ENCODE measurements at regions of chr22 and their contacts with region 1.

Region 1: DNA sequence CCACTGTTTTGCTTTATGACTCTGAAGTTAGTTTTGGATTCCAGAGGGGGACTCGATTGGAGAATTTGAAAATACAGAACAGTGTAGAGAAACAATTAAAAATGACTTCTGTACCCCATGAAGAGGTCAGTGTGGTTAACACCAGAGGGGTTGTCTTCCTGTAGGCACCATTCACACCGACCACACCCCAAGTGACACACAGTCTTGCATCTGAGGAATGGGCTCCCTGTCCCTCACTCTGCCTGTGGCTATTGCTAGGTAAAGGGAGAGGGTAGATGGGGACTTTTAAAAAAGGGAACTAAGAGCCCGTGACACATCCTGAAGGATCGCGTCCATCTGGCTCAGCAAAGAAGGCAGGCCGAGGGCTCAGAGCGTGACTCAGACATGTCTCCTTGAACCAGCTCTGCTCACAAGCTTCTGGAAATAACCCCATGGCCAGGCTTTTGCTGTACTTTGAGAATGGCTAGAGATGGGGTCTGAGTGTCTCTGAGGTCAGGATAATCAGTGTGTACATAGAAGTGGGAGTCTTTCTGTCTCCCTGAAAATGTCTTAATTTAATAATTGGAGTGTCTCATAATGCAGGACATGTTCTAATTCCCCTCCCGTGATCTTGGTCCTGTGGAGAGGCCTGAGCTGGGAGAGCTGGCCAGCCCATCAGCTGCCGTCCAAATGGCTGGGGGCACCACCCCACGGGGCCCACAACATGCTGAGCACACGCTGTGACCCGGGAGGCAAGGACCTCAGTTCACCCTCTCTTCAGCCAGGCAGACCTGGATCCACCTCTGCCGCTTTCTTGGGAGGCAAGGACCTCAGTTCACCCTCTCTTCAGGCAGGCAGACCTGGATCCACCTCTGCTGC is 39.3 kb downstream of the SGSM1 start:
- H3K4me3 ChIP-seq: no peak overlapping the region
- H3K27ac ChIP-seq: no peak overlapping the region
- H3K4me1 ChIP-seq: no peaks in the 10 kb centered on the region
- CTCF ChIP-seq: no peak

Region 2: DNA sequence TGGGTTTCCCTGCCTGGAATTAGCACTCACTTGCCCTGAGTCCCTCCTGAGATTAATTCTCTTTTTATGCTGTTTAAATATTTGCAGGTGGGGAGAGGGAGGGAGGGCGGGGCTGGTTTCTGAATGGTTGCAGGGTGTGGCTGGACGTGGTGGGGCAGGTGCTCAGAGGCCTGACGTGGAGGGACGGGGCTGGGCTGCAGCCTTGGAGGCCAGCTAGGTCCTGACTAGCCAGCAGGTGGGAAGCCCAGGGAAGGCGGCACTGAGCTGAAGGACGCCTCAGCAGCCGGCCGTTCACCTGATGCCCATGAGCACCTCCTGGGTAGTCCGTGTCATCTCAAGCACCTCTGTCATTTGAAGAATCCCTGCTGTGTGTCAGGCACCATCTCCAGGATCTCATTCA is 18.0 kb before region 1 on chr22:
- CTCF ChIA-PET with region 1: interaction called, 10 read pairs
- POLR2A ChIA-PET with region 1: no interaction called
- H3K4me3 ChIP-seq: no peak overlapping the region
- H3K27ac ChIP-seq: no peak overlapping the region
- H3K4me1 ChIP-seq: no peaks in the 10 kb centered on the region
- CTCF ChIP-seq: no peak

Region 3: DNA sequence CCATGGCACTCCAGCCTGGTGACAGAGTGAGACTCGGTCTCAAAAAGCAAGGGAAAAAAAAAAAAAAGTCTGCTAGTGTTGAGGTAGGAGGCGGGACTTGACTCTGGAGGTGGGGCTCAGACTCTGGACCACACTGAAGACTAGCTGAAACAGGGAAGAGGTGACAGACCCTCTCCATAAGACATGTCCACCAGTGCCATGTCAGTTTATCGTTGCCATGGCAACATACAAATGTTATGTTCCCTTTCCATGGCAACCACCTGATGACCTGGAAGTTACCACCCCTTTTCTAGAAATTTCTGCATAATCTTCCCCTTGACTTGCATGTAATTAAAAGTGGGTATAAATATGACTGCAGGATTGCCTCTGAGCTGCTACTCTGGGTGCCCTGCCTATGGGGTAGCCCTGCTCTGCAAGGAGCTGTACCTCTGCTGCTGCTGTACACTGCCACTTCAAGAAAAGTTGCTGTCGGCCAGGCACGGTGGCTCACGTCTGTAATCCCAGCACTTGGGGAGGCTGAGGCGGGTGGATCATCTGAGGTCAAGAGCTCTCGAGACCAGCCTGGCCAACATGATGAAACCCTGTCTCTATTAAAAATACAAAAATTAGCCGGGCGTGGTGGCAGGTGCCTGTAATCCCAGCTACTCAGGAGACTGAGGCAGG is 162.3 kb after region 1 on chr22:
- CTCF ChIA-PET with region 1: no interaction called
- POLR2A ChIA-PET with region 1: no interaction called
- H3K4me3 ChIP-seq: no peak overlapping the region
- H3K27ac ChIP-seq: no peak overlapping the region
- H3K4me1 ChIP-seq: no peaks in the 10 kb centered on the region
- CTCF ChIP-seq: no peak